Left cardiac atrium (tissue), 4 donors: ENCODE measurements at regions of chr1 and their contacts with region 1.

Region 1: GRCh38 chr1:161225534-161226319 is at the start of gene TOMM40L:
- DNase-seq: peak; percentile 94
- ATAC-seq: peak; percentile 97
- total RNA-seq, gene TOMM40L: 31.2 to 34.8 TPM

Region 2: GRCh38 chr1:161209790-161210409 is 15.8 kb before region 1 on chr1:
- intact Hi-C with region 1: loop called in 1 of 2 experiments (anchors 2 kb)
- DNase-seq: peak; percentile 85
- ATAC-seq: peak; percentile 63 to 75

Region 3: DNA sequence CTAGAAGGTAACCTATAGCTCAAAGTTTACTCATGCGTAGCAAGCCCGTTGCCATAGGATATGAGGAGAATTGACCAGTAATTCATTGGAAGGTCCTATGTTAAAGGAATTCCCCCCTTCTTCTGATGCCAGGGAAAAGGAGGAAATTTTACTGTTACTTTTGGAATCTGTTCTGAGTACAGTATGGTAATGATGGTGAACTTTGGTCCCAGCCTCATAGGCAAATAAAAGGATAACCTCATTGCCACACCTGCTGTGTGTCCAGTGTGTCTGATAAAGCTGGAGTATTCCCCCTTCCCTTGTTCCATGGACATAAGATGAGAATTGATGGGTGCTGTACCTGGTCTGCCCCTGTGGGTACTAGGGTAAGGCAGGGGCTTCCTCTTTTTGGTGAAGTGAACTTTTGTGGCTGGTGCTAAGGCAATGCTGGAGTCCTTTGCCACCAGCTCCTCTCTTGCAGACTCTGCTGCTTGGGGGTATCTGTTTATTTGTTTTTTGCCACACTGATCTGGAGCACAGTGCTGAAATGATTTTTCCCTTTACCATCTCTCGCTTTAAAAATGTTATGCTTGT is 61.8 kb after region 1 on chr1:
- intact Hi-C with region 1: loop called in 1 of 2 experiments (anchors 10 kb)
- DNase-seq: no peak
- ATAC-seq: no peak

Region 4: DNA sequence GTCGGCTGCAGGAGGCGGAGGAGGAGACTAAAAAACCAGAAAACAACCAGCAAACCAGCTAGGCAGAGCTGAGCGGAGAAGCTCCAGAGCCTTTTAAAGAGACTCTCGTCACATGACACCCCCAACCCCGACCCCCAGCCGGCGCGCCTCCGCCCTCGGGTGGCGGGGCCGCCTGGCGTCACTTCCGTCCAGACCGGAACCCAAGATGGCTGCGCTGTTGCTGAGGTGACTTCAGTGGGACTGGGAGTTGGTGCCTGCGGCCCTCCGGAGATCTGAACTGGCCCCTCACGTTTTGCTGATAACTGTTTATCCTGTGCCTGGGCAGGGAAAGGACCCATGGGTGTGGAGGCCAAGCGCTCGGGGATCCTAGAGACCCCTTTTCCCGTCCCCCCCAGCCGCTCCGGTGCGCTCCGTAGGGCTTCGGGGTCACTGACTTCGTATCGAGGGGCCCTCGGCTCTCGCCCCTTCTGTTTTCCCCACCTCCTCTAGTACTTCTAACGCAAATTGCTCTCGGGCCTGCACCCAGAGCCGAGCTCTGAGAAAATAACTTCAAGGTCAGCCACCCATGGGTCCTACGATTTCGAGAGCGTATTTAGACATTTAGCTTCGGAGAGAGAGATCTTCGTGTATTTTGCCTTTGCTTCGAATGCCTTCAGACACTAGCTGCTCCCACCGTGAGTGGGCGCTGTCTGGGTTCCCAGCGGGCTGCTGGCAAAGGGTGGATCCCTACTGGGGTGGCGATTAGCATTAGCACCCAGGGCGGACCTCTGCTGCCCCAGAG is 88.7 kb after region 1 on chr1 and contains the start of gene SDHC:
- intact Hi-C with region 1: loop called in 1 of 2 experiments (anchors 5 kb)
- DNase-seq: peak; percentile 93
- ATAC-seq: peak; percentile 99 to 100
- total RNA-seq, gene SDHC: 241 to 284 TPM

Region 5: GRCh38 chr1:161382214-161383019 is 156.7 kb after region 1 on chr1:
- intact Hi-C with region 1: loop called (anchors 2 to 10 kb)
- DNase-seq: peak; percentile 48
- ATAC-seq: peak; percentile 85 to 94

Region 6: GRCh38 chr1:161389691-161390558 is 164.2 kb after region 1 on chr1:
- intact Hi-C with region 1: loop called in 1 of 2 experiments (anchors 10 kb)
- DNase-seq: peak; percentile 98
- ATAC-seq: peak; percentile 95